CD4-positive, alpha-beta memory T cell (primary cell): ENCODE measurements at regions of chr21 and their contacts with region 1.

Region 1: GRCh38 chr21:45224189-45224938 is 63.3 kb downstream of the POFUT2 start:
- DNase-seq: peak; percentile 79 to 89 (median 82)
- H3K4me3 ChIP-seq: no peak overlapping the region
- H3K4me3 Mint-ChIP-seq: peak overlapping the region; percentile 63 to 85 (median 76)
- H3K27ac ChIP-seq: peak overlapping the region; percentile 42
- H3K27ac Mint-ChIP-seq: peak overlapping the region; percentile 80 to 97 (median 95)
- H3K4me1 ChIP-seq: peaks cover 43% of the 10 kb centered on the region
- H3K4me1 Mint-ChIP-seq: peaks cover 35 to 53% (median 44%) of the 10 kb centered on the region in 4 donors
- H3K27me3 ChIP-seq: no peaks in the 10 kb centered on the region
- H3K27me3 Mint-ChIP-seq: no peaks in the 10 kb centered on the region

Region 2: GRCh38 chr21:45200581-45201296 is 23.6 kb before region 1 on chr21:
- CTCF ChIA-PET with region 1: no interaction called
- POLR2A ChIA-PET with region 1: no interaction called
- intact Hi-C with region 1: no loop called
- DNase-seq: no peak
- H3K4me3 ChIP-seq: no peak overlapping the region
- H3K4me3 Mint-ChIP-seq: peak overlapping the region in 1 of 8 donors; percentile 65
- H3K27ac ChIP-seq: no peak overlapping the region
- H3K27ac Mint-ChIP-seq: peak overlapping the region in 5 of 7 donors; percentile 24 to 82 (median 47)
- H3K4me1 ChIP-seq: peaks cover 13% of the 10 kb centered on the region
- H3K4me1 Mint-ChIP-seq: peaks cover 8 to 23% (median 11%) of the 10 kb centered on the region in 4 donors
- H3K27me3 ChIP-seq: no peaks in the 10 kb centered on the region
- H3K27me3 Mint-ChIP-seq: no peaks in the 10 kb centered on the region

Region 3: DNA sequence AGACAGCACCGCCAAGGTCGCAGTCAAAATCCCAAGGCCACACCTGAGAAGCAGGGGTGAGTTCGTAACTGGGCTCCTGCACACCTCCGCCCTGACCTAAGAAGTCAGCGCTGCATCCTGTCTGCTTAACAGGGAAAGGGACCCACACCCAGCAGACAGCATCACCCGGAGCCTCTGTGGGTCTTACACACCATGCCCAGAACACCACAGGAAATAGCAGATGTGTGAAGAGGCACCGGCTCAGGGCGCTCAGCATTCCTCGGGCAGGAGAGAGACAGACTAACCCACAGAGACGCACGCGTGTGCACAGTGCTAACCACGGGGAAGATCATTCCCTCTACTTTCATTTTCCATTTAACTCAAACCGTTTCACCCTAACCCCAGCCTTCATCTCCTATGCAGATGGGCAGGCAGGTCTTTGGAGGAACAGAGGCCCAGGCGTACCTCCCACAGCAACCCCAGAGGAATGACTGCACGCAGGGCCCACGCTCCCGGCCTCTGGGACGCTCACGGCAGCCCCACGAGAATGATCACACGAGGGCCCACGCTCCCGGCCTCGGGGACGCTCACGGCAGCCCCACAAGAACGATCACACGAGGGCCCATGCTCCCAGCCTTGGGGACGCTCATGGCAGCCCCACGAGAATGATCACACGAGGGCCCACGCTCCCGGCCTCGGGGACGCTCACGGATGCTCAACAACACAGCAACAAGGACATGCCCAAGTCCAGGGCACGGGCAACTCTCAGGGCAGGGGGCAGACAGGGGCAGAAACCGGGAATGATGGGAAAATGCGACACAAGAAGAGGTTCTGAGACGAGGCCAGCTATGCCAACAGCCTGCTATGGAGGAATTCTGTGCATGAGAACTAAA is 42.4 kb after region 1 on chr21:
- CTCF ChIA-PET with region 1: no interaction called
- POLR2A ChIA-PET with region 1: no interaction called
- intact Hi-C with region 1: loop called (anchors 2 kb)
- DNase-seq: peak; percentile 52 to 81 (median 75)
- H3K4me3 ChIP-seq: no peak overlapping the region
- H3K4me3 Mint-ChIP-seq: peak overlapping the region; percentile 36 to 80 (median 66)
- H3K27ac ChIP-seq: peak overlapping the region; percentile 23
- H3K27ac Mint-ChIP-seq: peak overlapping the region; percentile 82 to 90 (median 86)
- H3K4me1 ChIP-seq: peaks cover 21% of the 10 kb centered on the region
- H3K4me1 Mint-ChIP-seq: peaks cover 14 to 27% (median 20%) of the 10 kb centered on the region in 4 donors
- H3K27me3 ChIP-seq: no peaks in the 10 kb centered on the region
- H3K27me3 Mint-ChIP-seq: no peaks in the 10 kb centered on the region